ENCODE measurements at regions of chr5 and their contacts with region 1.

Region 1: DNA sequence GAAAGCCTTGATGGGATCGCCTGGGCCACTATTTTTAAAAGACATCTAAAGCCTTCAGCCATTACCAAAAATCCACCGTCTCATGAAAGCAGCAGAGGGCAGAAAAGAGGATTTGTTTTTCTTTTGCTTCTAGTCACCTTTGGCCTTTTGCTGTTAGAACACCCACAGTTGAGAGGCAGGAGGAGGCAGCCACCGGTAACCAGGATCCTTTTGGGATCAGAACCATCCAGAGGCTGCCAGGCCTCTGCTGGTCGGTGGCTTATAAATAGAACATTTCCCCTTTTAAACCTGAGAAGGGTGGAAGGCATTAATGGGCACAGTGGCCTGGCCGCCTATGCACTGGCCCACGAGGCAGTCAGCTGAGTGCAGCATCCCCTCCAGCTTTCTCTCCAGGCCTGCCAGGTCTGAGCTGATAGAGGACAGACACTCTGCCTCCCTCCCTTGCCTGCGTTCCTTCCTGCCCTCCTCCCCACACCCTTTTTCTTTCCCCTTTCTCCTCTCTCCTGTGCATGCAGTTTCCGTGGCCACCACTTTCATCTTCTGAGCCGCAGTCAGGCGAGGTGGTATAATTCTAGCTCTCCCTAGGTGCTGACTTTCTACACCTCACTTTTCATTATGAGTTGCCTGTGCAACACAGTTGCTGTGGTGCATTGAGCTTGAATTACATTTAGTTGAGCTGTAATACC is 253.4 kb downstream of the ARHGAP26 start:
- DNase-seq: peak; percentile 92
- H3K4me3 ChIP-seq: no peak overlapping the region
- H3K27ac ChIP-seq: peak overlapping the region; percentile 38 to 64 (median 58)
- H3K4me1 ChIP-seq: peaks cover 0 to 28% (median 19%) of the 10 kb centered on the region in 4 donors
- H3K27me3 ChIP-seq: no peaks in the 10 kb centered on the region
- CTCF ChIP-seq: peak in 2 of 4 experiments; percentile 17 to 26
- EP300 ChIP-seq: peak; percentile 58 to 85 (median 76)
- POLR2A ChIP-seq: no peak

Region 2: GRCh38 chr5:142110051-142110531 is 913.5 kb before region 1 on chr5:
- intact Hi-C with region 1: no loop called
- DNase-seq: peak; percentile 71
- H3K4me3 ChIP-seq: peak overlapping the region; percentile 60 to 77 (median 71)
- H3K27ac ChIP-seq: peak overlapping the region; percentile 96 to 97 (median 96)
- H3K4me1 ChIP-seq: peaks cover 0 to 38% (median 23%) of the 10 kb centered on the region in 4 donors
- H3K27me3 ChIP-seq: no peaks in the 10 kb centered on the region
- CTCF ChIP-seq: no peak
- EP300 ChIP-seq: no peak
- POLR2A ChIP-seq: no peak

Region 3: GRCh38 chr5:142644640-142645361 is 378.8 kb before region 1 on chr5:
- intact Hi-C with region 1: no loop called
- DNase-seq: peak; percentile 75
- H3K4me3 ChIP-seq: no peak overlapping the region
- H3K27ac ChIP-seq: peak overlapping the region; percentile 59 to 83 (median 67)
- H3K4me1 ChIP-seq: peaks cover 0 to 36% (median 27%) of the 10 kb centered on the region in 4 donors
- H3K27me3 ChIP-seq: no peaks in the 10 kb centered on the region
- CTCF ChIP-seq: no peak
- EP300 ChIP-seq: peak in 2 of 4 donors; percentile 5 to 37
- POLR2A ChIP-seq: no peak

Region 4: GRCh38 chr5:142748568-142749249 is 274.8 kb before region 1 on chr5:
- intact Hi-C with region 1: no loop called
- DNase-seq: no peak
- H3K4me3 ChIP-seq: no peak overlapping the region
- H3K27ac ChIP-seq: no peak overlapping the region
- H3K4me1 ChIP-seq: peaks cover 0 to 28% (median 23%) of the 10 kb centered on the region in 4 donors
- H3K27me3 ChIP-seq: no peaks in the 10 kb centered on the region
- CTCF ChIP-seq: peak in 3 of 4 experiments; percentile 30 to 36 (median 35)
- EP300 ChIP-seq: no peak
- POLR2A ChIP-seq: no peak

Region 5: GRCh38 chr5:143128412-143129071 is 105.0 kb after region 1 on chr5:
- intact Hi-C with region 1: loop called (anchors 5 kb)
- DNase-seq: no peak
- H3K4me3 ChIP-seq: no peak overlapping the region
- H3K27ac ChIP-seq: peak overlapping the region in 3 of 4 donors; percentile 48 to 77 (median 72)
- H3K4me1 ChIP-seq: peaks cover 0 to 41% (median 23%) of the 10 kb centered on the region in 4 donors
- H3K27me3 ChIP-seq: no peaks in the 10 kb centered on the region
- CTCF ChIP-seq: no peak
- EP300 ChIP-seq: peak in 2 of 4 donors; percentile 49 to 72
- POLR2A ChIP-seq: no peak

Region 6: DNA sequence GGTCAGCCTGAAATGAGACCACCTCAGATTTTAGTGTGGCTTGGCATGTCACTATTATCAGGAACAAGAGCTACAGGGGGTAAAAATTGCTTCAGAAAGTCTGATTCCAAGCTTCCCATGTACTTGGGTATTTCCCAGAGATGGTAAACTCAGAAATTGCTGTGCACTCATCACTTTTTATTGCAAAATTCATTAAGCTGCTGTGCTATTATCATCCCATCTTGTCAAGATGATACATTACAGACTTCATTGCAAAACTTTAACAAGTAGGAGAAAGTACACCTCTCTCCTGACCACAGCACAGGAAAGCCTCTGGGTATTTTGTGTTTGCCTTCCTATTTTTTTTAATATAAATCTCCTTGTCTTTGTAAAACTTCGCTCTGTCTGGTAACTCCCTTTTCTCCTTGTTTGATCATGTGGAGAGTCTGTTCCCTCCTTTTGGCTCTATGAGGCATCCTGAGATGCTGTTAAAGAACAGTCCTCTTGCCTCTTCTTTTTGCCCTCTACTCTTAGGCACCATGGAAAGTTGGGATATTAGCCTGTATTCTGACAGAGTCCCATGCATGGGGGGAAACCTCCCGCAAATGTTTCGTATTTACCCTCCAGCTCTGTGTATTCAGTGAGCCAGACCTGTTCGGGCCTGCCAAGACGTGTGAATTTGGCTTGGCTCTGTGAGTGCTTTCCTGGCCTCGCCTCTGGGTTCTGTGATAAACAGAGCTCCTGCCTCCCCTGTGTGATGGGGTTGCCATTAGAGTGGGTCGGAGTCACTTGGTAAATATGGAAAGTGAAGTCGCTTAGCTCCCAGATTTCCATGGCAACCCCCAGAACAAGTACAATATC is 119.3 kb after region 1 on chr5:
- intact Hi-C with region 1: loop called (anchors 1 kb)
- DNase-seq: peak; percentile 81
- H3K4me3 ChIP-seq: no peak overlapping the region
- H3K27ac ChIP-seq: peak overlapping the region; percentile 66 to 77 (median 70)
- H3K4me1 ChIP-seq: peaks cover 0 to 45% (median 38%) of the 10 kb centered on the region in 4 donors
- H3K27me3 ChIP-seq: no peaks in the 10 kb centered on the region
- CTCF ChIP-seq: no peak
- EP300 ChIP-seq: peak; percentile 39 to 76 (median 61)
- POLR2A ChIP-seq: no peak